GM10248 (cell line): ENCODE measurements at regions of chr10 and their contacts with region 1.

Region 1: GRCh38 chr10:121448766-121449421 is 149.3 kb downstream of the FGFR2 start:
- DNase-seq: peak; percentile 33
- CTCF ChIP-seq: no peak

Region 2: DNA sequence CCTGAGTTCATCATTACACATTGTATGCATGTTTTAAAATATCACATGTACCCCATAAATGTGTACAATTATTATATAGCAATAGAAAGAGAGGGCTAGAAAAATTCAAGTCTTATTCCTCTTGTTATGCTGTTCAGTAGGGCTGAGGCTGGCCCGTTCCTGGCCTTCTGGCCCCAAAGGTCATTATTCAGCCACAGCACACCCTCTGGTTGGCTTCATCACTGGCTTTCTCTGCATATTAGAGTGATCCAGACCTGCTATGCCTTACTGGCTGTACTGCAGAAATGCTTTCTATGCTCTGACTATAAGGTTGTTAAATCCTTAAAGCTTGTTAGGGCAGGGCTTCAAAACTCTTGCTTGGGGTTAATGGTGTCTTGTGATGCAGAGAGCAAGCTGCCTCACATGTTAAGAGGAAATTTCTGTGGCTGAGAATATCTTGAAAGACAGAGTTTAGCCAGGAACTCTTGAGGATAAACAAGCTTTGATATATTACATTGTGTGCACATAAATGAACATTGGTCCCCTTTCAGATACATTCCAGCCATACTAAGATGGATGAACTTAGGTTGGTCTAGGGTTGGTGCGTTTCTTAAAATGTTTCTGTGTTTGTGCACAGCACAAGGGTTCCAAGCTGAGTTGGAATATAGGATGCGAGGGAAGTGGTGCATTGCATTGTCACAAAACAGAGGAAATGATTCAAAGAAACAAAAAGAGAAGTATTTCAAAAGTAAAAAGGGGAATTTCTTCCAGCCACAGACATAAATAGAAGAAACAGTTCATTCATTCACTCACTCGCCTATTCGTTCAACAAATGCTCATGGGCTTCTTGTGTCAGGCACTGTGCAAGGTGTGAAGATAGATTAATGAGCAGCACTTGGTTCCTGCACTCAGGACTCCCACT is 659.3 kb before region 1 on chr10:
- CTCF ChIA-PET with region 1: no interaction called
- POLR2A ChIA-PET with region 1: interaction called, 10 read pairs
- DNase-seq: no peak
- CTCF ChIP-seq: no peak

Region 3: GRCh38 chr10:121437596-121437995 is 11.3 kb before region 1 on chr10:
- CTCF ChIA-PET with region 1: no interaction called
- POLR2A ChIA-PET with region 1: no interaction called
- DNase-seq: no peak
- CTCF ChIP-seq: no peak